CD8-positive, alpha-beta T cell (primary cell): ENCODE measurements at regions of chr21 and their contacts with region 1.

Region 1: GRCh38 chr21:31558962-31559367 is 100.5 kb upstream of the SOD1 start:
- DNase-seq: peak; percentile 76 to 93 (median 89)
- ATAC-seq: peak; percentile 83
- H3K4me3 ChIP-seq: peak overlapping the region; percentile 51 to 54
- H3K4me3 Mint-ChIP-seq: peak overlapping the region; percentile 92
- H3K27ac ChIP-seq: peak overlapping the region in 1 of 2 experiments; percentile 7
- H3K27ac Mint-ChIP-seq: no peak overlapping the region
- H3K4me1 ChIP-seq: peaks cover 15% of the 10 kb centered on the region
- H3K4me1 Mint-ChIP-seq: peaks cover 25% of the 10 kb centered on the region
- H3K27me3 ChIP-seq: peaks cover 0 to 2% of the 10 kb centered on the region in 2 experiments
- H3K27me3 Mint-ChIP-seq: peaks cover 8% of the 10 kb centered on the region
- CTCF ChIP-seq: no peak

Region 2: GRCh38 chr21:31343680-31344480 is 215.1 kb before region 1 on chr21 and contains the start of gene TIAM1:
- CTCF ChIA-PET with region 1: no interaction called
- POLR2A ChIA-PET with region 1: interaction called, 5 read pairs
- intact Hi-C with region 1: loop called in 1 of 2 experiments (anchors 5 kb)
- DNase-seq: peak in 3 of 9 experiments; percentile 8 to 29 (median 12)
- ATAC-seq: no peak
- H3K4me3 ChIP-seq: peak within 1 kb of the TSS; percentile 49 to 55
- H3K4me3 Mint-ChIP-seq: peak within 1 kb of the TSS; percentile 90
- H3K27ac ChIP-seq: no peak within 1 kb of the TSS
- H3K27ac Mint-ChIP-seq: peak within 1 kb of the TSS; percentile 67
- H3K4me1 ChIP-seq: peaks cover 15% of the 10 kb centered on the region
- H3K4me1 Mint-ChIP-seq: peaks cover 35% of the 10 kb centered on the region
- H3K27me3 ChIP-seq: no peaks in the 10 kb centered on the region
- H3K27me3 Mint-ChIP-seq: peaks cover 17% of the 10 kb centered on the region
- CTCF ChIP-seq: no peak
- total RNA-seq, gene TIAM1: 8.0 to 8.5 TPM

Region 3: GRCh38 chr21:31354604-31355443 is 204.1 kb before region 1 on chr21:
- CTCF ChIA-PET with region 1: no interaction called
- POLR2A ChIA-PET with region 1: no interaction called
- intact Hi-C with region 1: loop called in 1 of 2 experiments (anchors 5 kb)
- DNase-seq: peak; percentile 23 to 90 (median 69)
- ATAC-seq: peak; percentile 87
- H3K4me3 ChIP-seq: no peak overlapping the region
- H3K4me3 Mint-ChIP-seq: peak overlapping the region; percentile 27
- H3K27ac ChIP-seq: peak overlapping the region in 1 of 2 experiments; percentile 25
- H3K27ac Mint-ChIP-seq: peak overlapping the region; percentile 76
- H3K4me1 ChIP-seq: peaks cover 21% of the 10 kb centered on the region
- H3K4me1 Mint-ChIP-seq: peaks cover 30% of the 10 kb centered on the region
- H3K27me3 ChIP-seq: no peaks in the 10 kb centered on the region
- H3K27me3 Mint-ChIP-seq: no peaks in the 10 kb centered on the region
- CTCF ChIP-seq: no peak

Region 4: GRCh38 chr21:31397515-31397926 is 161.4 kb before region 1 on chr21:
- CTCF ChIA-PET with region 1: interaction called, 4 read pairs
- POLR2A ChIA-PET with region 1: interaction called, 4 read pairs
- intact Hi-C with region 1: loop called in 1 of 2 experiments (anchors 1 kb)
- DNase-seq: no peak
- ATAC-seq: no peak
- H3K4me3 ChIP-seq: peak overlapping the region in 1 of 2 experiments; percentile 14
- H3K4me3 Mint-ChIP-seq: no peak overlapping the region
- H3K27ac ChIP-seq: no peak overlapping the region
- H3K27ac Mint-ChIP-seq: peak overlapping the region; percentile 84
- H3K4me1 ChIP-seq: peaks cover 47% of the 10 kb centered on the region
- H3K4me1 Mint-ChIP-seq: peaks cover 58% of the 10 kb centered on the region
- H3K27me3 ChIP-seq: peaks cover 0 to 2% of the 10 kb centered on the region in 2 experiments
- H3K27me3 Mint-ChIP-seq: no peaks in the 10 kb centered on the region
- CTCF ChIP-seq: no peak

Region 5: DNA sequence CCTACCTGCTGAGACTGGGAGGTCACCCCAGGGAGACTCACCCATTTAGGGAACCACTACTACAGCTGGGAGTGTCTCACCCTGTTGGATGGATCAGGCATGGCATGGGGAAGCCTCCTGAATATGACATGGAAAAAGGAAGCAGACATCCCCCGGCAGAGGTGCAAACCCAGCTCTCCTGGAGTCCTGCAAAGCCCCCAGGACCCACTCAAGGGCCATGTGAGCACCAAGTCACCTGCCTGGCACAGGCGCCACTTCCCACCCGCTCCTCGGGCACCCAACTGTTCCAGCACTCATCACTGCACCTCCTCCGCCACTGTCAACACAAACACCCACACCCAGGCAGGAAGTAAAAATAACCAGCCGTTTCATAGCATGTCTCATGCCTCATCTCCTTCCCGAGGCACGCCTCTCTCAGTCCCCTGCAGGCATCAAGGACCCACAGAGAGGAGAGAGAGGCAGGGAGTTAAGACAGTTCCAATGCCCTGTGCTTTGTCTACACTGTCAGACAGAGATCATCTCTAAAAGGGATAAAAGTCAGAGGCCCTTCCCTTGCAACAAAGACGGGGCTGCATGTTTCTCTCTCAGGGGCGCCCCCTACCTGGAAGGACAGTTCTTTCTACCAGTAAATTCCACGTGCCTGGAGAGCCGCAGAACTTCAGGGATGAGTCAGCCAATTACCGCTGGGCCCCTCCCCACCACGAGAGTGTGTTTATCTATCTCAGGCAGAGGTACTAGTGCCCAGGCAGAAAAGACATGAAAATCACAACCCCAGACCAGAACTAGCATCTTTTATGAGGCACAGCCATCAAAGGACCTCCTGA is 49.6 kb before region 1 on chr21:
- CTCF ChIA-PET with region 1: no interaction called
- POLR2A ChIA-PET with region 1: no interaction called
- intact Hi-C with region 1: loop called in 1 of 2 experiments (anchors 10 kb)
- DNase-seq: peak; percentile 29 to 74 (median 61)
- ATAC-seq: peak; percentile 81
- H3K4me3 ChIP-seq: no peak overlapping the region
- H3K4me3 Mint-ChIP-seq: peak overlapping the region; percentile 33
- H3K27ac ChIP-seq: no peak overlapping the region
- H3K27ac Mint-ChIP-seq: peak overlapping the region; percentile 1
- H3K4me1 ChIP-seq: peaks cover 23% of the 10 kb centered on the region
- H3K4me1 Mint-ChIP-seq: peaks cover 33% of the 10 kb centered on the region
- H3K27me3 ChIP-seq: no peaks in the 10 kb centered on the region
- H3K27me3 Mint-ChIP-seq: peaks cover 2% of the 10 kb centered on the region
- CTCF ChIP-seq: peak; percentile 36